ENCODE measurements at regions of chr10 and their contacts with region 1.

Region 1: DNA sequence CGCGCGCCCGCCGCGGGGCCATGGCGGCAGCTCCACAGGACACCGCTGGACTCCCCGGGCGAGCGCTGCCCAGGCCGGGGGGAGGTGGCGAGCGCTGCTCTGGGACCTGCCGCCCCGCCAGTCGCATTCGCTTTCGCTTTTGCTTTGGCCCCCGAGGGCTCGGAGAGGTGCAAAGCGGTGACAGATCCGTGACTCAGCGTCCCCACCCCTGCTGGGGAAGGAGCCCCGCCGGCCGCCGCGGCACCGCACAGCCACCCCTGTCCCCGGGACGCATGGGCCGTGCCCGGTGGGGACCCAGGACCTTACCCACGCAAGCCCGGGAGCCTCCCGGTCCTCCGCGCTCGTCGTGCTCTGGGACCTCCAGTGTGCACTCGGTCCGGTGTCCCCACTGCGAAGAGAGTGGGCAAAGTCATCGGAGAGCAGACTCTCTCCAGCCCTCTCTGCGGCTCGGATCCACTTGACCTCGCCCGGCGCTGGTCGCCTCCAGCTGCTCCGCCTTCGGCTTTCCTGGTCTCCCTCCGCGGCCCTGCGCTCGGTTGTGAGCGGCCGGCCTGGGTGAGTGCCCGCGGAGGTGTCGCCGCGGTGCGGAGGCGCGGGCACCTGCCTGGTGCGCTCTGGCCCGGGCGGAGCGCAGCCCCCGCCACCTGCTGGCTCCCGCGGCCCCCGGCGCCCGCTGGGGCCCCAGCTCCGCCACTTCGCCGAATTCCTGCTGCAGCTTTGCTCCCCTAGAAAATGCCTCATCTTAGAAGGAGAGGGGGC is at the start of gene IL15RA:
- DNase-seq: peak; percentile 76 to 92 (median 81)
- H3K4me3 ChIP-seq: peak within 1 kb of the TSS; percentile 79 to 96
- H3K4me3 Mint-ChIP-seq: peak within 1 kb of the TSS; percentile 95 to 99 (median 98)
- H3K27ac ChIP-seq: peak within 1 kb of the TSS; percentile 84
- H3K27ac Mint-ChIP-seq: peak within 1 kb of the TSS; percentile 93 to 98 (median 96)
- H3K4me1 ChIP-seq: peaks cover 23% of the 10 kb centered on the region
- H3K4me1 Mint-ChIP-seq: peaks cover 17 to 42% (median 29%) of the 10 kb centered on the region in 4 donors
- H3K27me3 ChIP-seq: no peaks in the 10 kb centered on the region
- H3K27me3 Mint-ChIP-seq: no peaks in the 10 kb centered on the region
- total RNA-seq, gene IL15RA: 11.1 to 14.7 TPM

Region 2: GRCh38 chr10:5889624-5890451 is 87.8 kb before region 1 on chr10 and contains the starts of genes ANKRD16 and FBH1:
- CTCF ChIA-PET with region 1: no interaction called
- POLR2A ChIA-PET with region 1: interaction called, 34 read pairs
- intact Hi-C with region 1: loop called (anchors 2 kb)
- DNase-seq: peak; percentile 95 to 98 (median 95)
- H3K4me3 ChIP-seq: peak within 1 kb of the TSS; percentile 54 to 71
- H3K4me3 Mint-ChIP-seq: peak within 1 kb of the TSS; percentile 91 to 98 (median 93)
- H3K27ac ChIP-seq: peak within 1 kb of the TSS; percentile 79
- H3K27ac Mint-ChIP-seq: peak within 1 kb of the TSS; percentile 87 to 95 (median 92)
- H3K4me1 ChIP-seq: peaks cover 33% of the 10 kb centered on the region
- H3K4me1 Mint-ChIP-seq: peaks cover 36 to 58% (median 45%) of the 10 kb centered on the region in 4 donors
- H3K27me3 ChIP-seq: no peaks in the 10 kb centered on the region
- H3K27me3 Mint-ChIP-seq: no peaks in the 10 kb centered on the region
- total RNA-seq, gene ANKRD16: 6.6 to 8.4 TPM
- total RNA-seq, gene FBH1: 91.4 to 97.5 TPM